ENCODE measurements at regions of chr5 and their contacts with region 1.

Region 1: GRCh38 chr5:150458819-150459557 is 9.4 kb upstream of the RPS14 start:
- DNase-seq: peak; percentile 73 to 93 (median 84)
- ATAC-seq: peak; percentile 93
- H3K4me3 ChIP-seq: no peak overlapping the region
- H3K4me3 Mint-ChIP-seq: peak overlapping the region; percentile 51
- H3K27ac ChIP-seq: peak overlapping the region; percentile 13 to 31
- H3K27ac Mint-ChIP-seq: peak overlapping the region; percentile 67
- H3K4me1 ChIP-seq: peaks cover 20% of the 10 kb centered on the region
- H3K4me1 Mint-ChIP-seq: peaks cover 37% of the 10 kb centered on the region
- H3K27me3 ChIP-seq: no peaks in the 10 kb centered on the region
- H3K27me3 Mint-ChIP-seq: no peaks in the 10 kb centered on the region
- CTCF ChIP-seq: peak; percentile 68

Region 2: GRCh38 chr5:150523472-150524350 is 64.7 kb after region 1 on chr5:
- CTCF ChIA-PET with region 1: interaction called, 18 read pairs
- POLR2A ChIA-PET with region 1: no interaction called
- intact Hi-C with region 1: loop called in 1 of 2 experiments (anchors 1 kb)
- DNase-seq: peak in 4 of 9 experiments; percentile 14 to 57 (median 34)
- ATAC-seq: peak; percentile 51
- H3K4me3 ChIP-seq: no peak overlapping the region
- H3K4me3 Mint-ChIP-seq: no peak overlapping the region
- H3K27ac ChIP-seq: no peak overlapping the region
- H3K27ac Mint-ChIP-seq: no peak overlapping the region
- H3K4me1 ChIP-seq: no peaks in the 10 kb centered on the region
- H3K4me1 Mint-ChIP-seq: no peaks in the 10 kb centered on the region
- H3K27me3 ChIP-seq: no peaks in the 10 kb centered on the region
- H3K27me3 Mint-ChIP-seq: no peaks in the 10 kb centered on the region
- CTCF ChIP-seq: peak; percentile 21

Region 3: DNA sequence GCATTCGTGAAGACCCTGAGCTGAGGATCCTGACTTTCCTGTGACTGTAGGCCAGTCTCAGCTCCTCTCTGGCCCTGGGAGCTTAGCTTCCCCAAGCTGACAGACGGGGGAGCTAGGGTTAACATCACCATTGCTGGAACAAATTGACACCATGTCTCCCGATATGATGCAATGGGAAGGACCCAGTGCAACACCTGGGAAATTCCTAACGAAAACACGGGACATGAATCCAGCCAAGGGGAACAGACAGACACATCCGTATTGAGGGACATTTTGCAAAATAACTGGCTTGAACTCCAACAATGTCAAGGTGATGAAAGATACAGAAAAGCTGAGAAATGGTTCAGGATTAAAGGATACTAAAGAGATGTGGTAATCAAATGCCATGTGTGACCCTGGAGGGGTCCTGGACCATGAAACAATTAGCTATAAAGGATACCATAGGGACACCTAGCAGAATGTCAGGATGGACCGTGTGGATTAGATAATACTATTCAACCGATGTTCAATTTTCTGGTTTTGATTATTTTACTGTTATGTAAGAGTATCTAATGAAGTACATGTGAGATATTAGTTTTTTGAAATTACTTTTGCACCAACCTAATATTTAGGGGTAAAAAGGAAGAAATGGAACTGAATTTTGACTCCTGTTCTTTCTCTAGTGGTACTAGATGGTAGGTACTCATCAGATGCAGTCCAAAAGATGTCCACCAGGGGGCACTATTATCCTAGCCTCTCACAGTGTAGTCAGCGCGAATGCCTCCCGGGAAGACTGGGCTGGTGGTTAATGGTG is 101.6 kb after region 1 on chr5:
- CTCF ChIA-PET with region 1: interaction called, 4 read pairs
- POLR2A ChIA-PET with region 1: no interaction called
- intact Hi-C with region 1: loop called (anchors 1 to 2 kb)
- DNase-seq: peak; percentile 68 to 93 (median 84)
- ATAC-seq: peak; percentile 97
- H3K4me3 ChIP-seq: no peak overlapping the region
- H3K4me3 Mint-ChIP-seq: no peak overlapping the region
- H3K27ac ChIP-seq: no peak overlapping the region
- H3K27ac Mint-ChIP-seq: no peak overlapping the region
- H3K4me1 ChIP-seq: no peaks in the 10 kb centered on the region
- H3K4me1 Mint-ChIP-seq: no peaks in the 10 kb centered on the region
- H3K27me3 ChIP-seq: no peaks in the 10 kb centered on the region
- H3K27me3 Mint-ChIP-seq: peaks cover 3% of the 10 kb centered on the region
- CTCF ChIP-seq: peak; percentile 92

Region 4: GRCh38 chr5:150700594-150701293 is 241.8 kb after region 1 on chr5 and contains the start of gene RBM22:
- CTCF ChIA-PET with region 1: interaction called, 3 read pairs
- POLR2A ChIA-PET with region 1: no interaction called
- intact Hi-C with region 1: loop called in 1 of 2 experiments (anchors 2 kb)
- DNase-seq: peak; percentile 82 to 96 (median 94)
- ATAC-seq: peak; percentile 90
- H3K4me3 ChIP-seq: peak within 1 kb of the TSS; percentile 80 to 81
- H3K4me3 Mint-ChIP-seq: no peak within 1 kb of the TSS
- H3K27ac ChIP-seq: peak within 1 kb of the TSS; percentile 94 to 97
- H3K27ac Mint-ChIP-seq: no peak within 1 kb of the TSS
- H3K4me1 ChIP-seq: peaks cover 19% of the 10 kb centered on the region
- H3K4me1 Mint-ChIP-seq: peaks cover 2% of the 10 kb centered on the region
- H3K27me3 ChIP-seq: no peaks in the 10 kb centered on the region
- H3K27me3 Mint-ChIP-seq: no peaks in the 10 kb centered on the region
- CTCF ChIP-seq: peak; percentile 85
- total RNA-seq, gene RBM22: 119 to 125 TPM

Region 5: GRCh38 chr5:150846654-150847333 is 387.8 kb after region 1 on chr5:
- CTCF ChIA-PET with region 1: interaction called, 7 read pairs
- POLR2A ChIA-PET with region 1: no interaction called
- intact Hi-C with region 1: loop called (anchors 1 kb)
- DNase-seq: peak in 8 of 9 experiments; percentile 39 to 93 (median 64)
- ATAC-seq: peak; percentile 90
- H3K4me3 ChIP-seq: peak overlapping the region; percentile 7 to 46
- H3K4me3 Mint-ChIP-seq: peak overlapping the region; percentile 78
- H3K27ac ChIP-seq: peak overlapping the region; percentile 4 to 57
- H3K27ac Mint-ChIP-seq: peak overlapping the region; percentile 87
- H3K4me1 ChIP-seq: no peaks in the 10 kb centered on the region
- H3K4me1 Mint-ChIP-seq: peaks cover 22% of the 10 kb centered on the region
- H3K27me3 ChIP-seq: no peaks in the 10 kb centered on the region
- H3K27me3 Mint-ChIP-seq: no peaks in the 10 kb centered on the region
- CTCF ChIP-seq: peak; percentile 75

Measured in CD8-positive, alpha-beta T cell (primary cell).